ENCODE measurements at regions of chr18 and their contacts with region 1.

Region 1: GRCh38 chr18:35484034-35484433 is 13.7 kb downstream of the INO80C start:
- DNase-seq: no peak
- H3K4me3 ChIP-seq: no peak overlapping the region
- H3K27ac ChIP-seq: no peak overlapping the region
- H3K27me3 ChIP-seq: no peaks in the 10 kb centered on the region
- CTCF ChIP-seq: no peak

Region 2: DNA sequence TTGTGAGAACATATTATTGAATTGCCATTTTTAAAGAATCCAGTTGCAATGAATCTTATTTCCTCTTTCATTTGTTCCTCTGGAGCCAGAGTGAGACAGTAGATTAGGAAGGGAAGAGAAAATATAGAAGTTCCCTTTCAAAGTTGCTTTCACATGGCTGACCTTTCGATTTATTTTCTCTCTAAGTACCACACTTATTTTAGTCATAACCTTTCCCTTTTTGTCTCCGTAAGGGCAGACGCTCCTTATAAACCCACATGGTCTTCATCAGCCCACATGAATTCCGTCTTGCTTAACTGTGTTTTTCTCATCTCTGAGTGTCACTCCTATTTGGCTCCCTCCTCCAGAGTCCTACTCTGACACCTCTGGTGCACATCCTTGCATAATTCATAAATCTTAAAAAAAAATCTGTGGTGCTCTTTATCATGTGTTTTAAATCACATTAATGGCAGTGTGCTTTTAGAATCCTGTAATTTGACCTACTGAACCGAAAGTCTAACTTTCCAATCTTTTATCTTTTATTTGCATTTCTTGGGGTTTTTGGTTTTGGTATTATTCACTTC is 68.4 kb before region 1 on chr18:
- intact Hi-C with region 1: loop called in 1 of 2 experiments (anchors 10 kb)
- DNase-seq: no peak
- H3K4me3 ChIP-seq: no peak overlapping the region
- H3K27ac ChIP-seq: no peak overlapping the region
- H3K27me3 ChIP-seq: no peaks in the 10 kb centered on the region
- CTCF ChIP-seq: no peak

Region 3: DNA sequence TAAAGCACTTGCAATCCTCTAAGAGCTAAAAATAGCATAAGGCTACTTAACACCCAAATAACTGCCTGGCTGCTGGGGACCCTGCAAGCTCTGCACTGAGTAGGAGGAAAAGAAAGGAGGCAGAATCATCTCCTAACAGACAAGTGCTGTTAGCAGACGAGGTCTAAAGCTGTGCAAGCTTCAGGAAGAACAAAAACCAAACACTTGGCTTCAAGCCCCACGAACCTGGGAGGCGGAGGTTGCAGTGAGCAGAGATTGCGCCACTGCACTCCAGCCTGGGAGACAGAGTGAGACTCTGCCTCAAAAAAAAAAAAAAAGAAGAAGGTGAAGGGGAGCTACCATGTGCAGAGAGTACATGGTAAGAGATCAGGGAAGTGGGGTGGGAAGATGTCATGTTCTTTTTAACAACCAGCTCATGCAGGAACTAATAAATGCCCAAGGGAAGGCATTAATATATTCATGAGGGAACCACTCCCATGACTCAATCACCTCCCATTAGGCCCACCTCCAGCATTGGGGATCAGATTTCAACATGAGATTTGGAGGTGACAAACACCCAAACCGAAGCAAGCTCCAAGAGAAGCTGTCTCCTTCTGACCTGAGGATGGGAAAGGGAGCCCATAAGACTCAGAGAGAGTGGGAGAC is 42.6 kb after region 1 on chr18:
- intact Hi-C with region 1: no loop called
- DNase-seq: no peak
- H3K4me3 ChIP-seq: peak overlapping the region in 7 of 59 donors; percentile 1 to 27 (median 12)
- H3K27ac ChIP-seq: no peak overlapping the region
- H3K27me3 ChIP-seq: no peaks in the 10 kb centered on the region
- CTCF ChIP-seq: no peak

Region 4: GRCh38 chr18:35549564-35549963 is 65.5 kb after region 1 on chr18:
- intact Hi-C with region 1: no loop called
- DNase-seq: no peak
- H3K4me3 ChIP-seq: no peak overlapping the region
- H3K27ac ChIP-seq: no peak overlapping the region
- H3K27me3 ChIP-seq: no peaks in the 10 kb centered on the region
- CTCF ChIP-seq: no peak

Region 5: DNA sequence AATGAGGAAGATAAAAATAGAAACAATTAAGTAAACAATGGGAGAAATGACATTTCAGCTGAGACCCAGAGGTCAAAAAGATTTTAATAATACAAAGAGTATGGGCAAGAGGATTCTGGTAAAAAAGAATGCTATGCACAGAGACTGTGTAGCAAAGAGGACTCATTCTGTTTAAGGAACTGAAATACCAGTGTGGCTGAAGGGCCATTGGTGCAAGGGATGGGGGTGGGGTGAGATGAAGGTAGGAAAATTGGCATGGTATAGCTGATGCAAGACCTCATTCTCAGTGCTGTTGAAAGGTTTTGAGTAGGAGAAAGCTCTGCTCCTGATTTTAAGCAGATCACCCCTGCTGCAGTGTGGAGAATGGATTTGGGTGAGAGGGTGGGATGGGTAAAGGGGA is 108.3 kb after region 1 on chr18:
- intact Hi-C with region 1: no loop called
- DNase-seq: no peak
- H3K4me3 ChIP-seq: no peak overlapping the region
- H3K27ac ChIP-seq: no peak overlapping the region
- H3K27me3 ChIP-seq: no peaks in the 10 kb centered on the region
- CTCF ChIP-seq: no peak

Region 6: GRCh38 chr18:36912887-36913286 is 1428.9 kb after region 1 on chr18:
- intact Hi-C with region 1: no loop called
- DNase-seq: no peak
- H3K4me3 ChIP-seq: no peak overlapping the region
- H3K27ac ChIP-seq: no peak overlapping the region
- H3K27me3 ChIP-seq: no peaks in the 10 kb centered on the region
- CTCF ChIP-seq: no peak